ENCODE measurements at regions of chr16 and their contacts with region 1.

Region 1: GRCh38 chr16:29926005-29926710 is at the start of gene KCTD13:
- DNase-seq: peak; percentile 81 to 99 (median 92)
- ATAC-seq: peak; percentile 96
- H3K4me3 ChIP-seq: peak within 1 kb of the TSS; percentile 88
- H3K4me3 Mint-ChIP-seq: peak within 1 kb of the TSS; percentile 89 to 95 (median 93)
- H3K27ac ChIP-seq: peak within 1 kb of the TSS; percentile 94
- H3K27ac Mint-ChIP-seq: peak within 1 kb of the TSS; percentile 91 to 98 (median 97)
- H3K4me1 ChIP-seq: peaks cover 7 to 18% of the 10 kb centered on the region in 2 donors
- H3K4me1 Mint-ChIP-seq: peaks cover 30 to 50% (median 40%) of the 10 kb centered on the region in 7 donors
- H3K27me3 ChIP-seq: no peaks in the 10 kb centered on the region
- H3K27me3 Mint-ChIP-seq: peaks cover 0 to 2% (median 0%) of the 10 kb centered on the region in 5 donors
- total RNA-seq, gene KCTD13: 40.7 to 81.1 (median 45.9) TPM

Region 2: DNA sequence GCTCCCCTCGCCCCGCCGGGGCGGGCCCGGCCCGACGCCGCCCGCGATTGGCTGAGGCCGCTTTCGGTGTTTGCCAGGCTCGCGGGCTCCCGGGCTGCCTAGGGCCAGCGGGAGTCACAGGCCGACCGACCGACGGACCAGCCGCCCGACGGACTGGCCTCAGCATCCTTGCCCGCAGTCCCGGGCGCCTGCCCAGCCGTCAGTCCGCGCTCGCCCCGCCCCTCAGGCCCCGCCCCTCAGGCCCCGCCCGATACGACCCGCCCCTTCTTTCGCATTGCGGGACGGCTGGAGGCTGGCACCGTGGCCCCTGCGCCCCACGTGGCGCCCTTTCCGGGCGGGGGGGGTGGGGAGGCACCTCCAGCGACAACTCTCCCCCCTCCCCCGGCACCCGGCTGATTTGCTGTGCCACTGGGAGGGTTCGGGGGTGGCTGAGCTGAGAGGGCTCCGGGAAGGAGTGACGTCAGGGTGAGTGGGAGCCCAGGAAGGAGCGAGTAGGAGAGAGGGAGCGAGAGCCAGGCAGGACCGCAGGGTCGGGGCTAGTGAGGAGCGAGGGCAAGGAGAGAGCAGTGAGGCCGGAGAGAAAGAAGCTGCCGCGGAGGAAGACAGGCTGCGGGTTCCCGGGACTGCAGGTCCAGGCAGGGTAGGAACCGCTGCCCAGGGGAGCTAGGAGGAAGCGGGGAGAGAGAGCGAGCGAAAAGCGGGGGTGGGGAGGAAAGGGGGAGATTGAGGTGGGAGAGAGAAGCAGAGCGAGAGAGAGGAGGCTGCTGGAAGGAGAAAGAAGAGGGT is 25.9 kb before region 1 on chr16 and contains the start of gene ASPHD1:
- CTCF ChIA-PET with region 1: no interaction called
- POLR2A ChIA-PET with region 1: interaction called, 8 read pairs
- intact Hi-C with region 1: loop called in 1 of 2 experiments (anchors 1 kb)
- DNase-seq: peak; percentile 68 to 91 (median 79)
- ATAC-seq: peak; percentile 93
- H3K4me3 ChIP-seq: peak within 1 kb of the TSS; percentile 53
- H3K4me3 Mint-ChIP-seq: peak within 1 kb of the TSS; percentile 53 to 86 (median 72)
- H3K27ac ChIP-seq: no peak within 1 kb of the TSS
- H3K27ac Mint-ChIP-seq: no peak within 1 kb of the TSS
- H3K4me1 ChIP-seq: peaks cover 5% of the 10 kb centered on the region in 2 donors
- H3K4me1 Mint-ChIP-seq: peaks cover 4 to 19% (median 11%) of the 10 kb centered on the region in 7 donors
- H3K27me3 ChIP-seq: peaks cover 5 to 13% of the 10 kb centered on the region in 2 donors
- H3K27me3 Mint-ChIP-seq: peaks cover 16 to 35% (median 26%) of the 10 kb centered on the region in 5 donors
- total RNA-seq, gene ASPHD1: 0.27 TPM in 1 of 5 experiments, not detected in the others

Region 3: GRCh38 chr16:29961479-29962343 is 35.6 kb after region 1 on chr16 and contains the start of gene TMEM219:
- CTCF ChIA-PET with region 1: interaction called, 5 read pairs
- POLR2A ChIA-PET with region 1: interaction called, 28 read pairs
- intact Hi-C with region 1: loop called (anchors 1 kb)
- DNase-seq: peak; percentile 90 to 99 (median 96)
- ATAC-seq: peak; percentile 94
- H3K4me3 ChIP-seq: peak within 1 kb of the TSS; percentile 91
- H3K4me3 Mint-ChIP-seq: peak within 1 kb of the TSS; percentile 88 to 94 (median 92)
- H3K27ac ChIP-seq: peak within 1 kb of the TSS; percentile 85
- H3K27ac Mint-ChIP-seq: peak within 1 kb of the TSS; percentile 88 to 97 (median 95)
- H3K4me1 ChIP-seq: peaks cover 10 to 17% of the 10 kb centered on the region in 2 donors
- H3K4me1 Mint-ChIP-seq: peaks cover 8 to 31% (median 23%) of the 10 kb centered on the region in 7 donors
- H3K27me3 ChIP-seq: no peaks in the 10 kb centered on the region
- H3K27me3 Mint-ChIP-seq: no peaks in the 10 kb centered on the region
- total RNA-seq, gene TMEM219: 64.3 to 89.7 (median 74.0) TPM

Region 4: GRCh38 chr16:29995911-29996772 is 70.0 kb after region 1 on chr16 and contains the start of gene INO80E:
- CTCF ChIA-PET with region 1: no interaction called
- POLR2A ChIA-PET with region 1: interaction called, 20 read pairs
- intact Hi-C with region 1: loop called (anchors 1 kb)
- DNase-seq: peak; percentile 94 to 99 (median 98)
- ATAC-seq: peak; percentile 99
- H3K4me3 ChIP-seq: peak within 1 kb of the TSS; percentile 100
- H3K4me3 Mint-ChIP-seq: peak within 1 kb of the TSS; percentile 86 to 99 (median 98)
- H3K27ac ChIP-seq: peak within 1 kb of the TSS; percentile 99
- H3K27ac Mint-ChIP-seq: peak within 1 kb of the TSS; percentile 93 to 99 (median 97)
- H3K4me1 ChIP-seq: peaks cover 16 to 18% of the 10 kb centered on the region in 2 donors
- H3K4me1 Mint-ChIP-seq: peaks cover 24 to 53% (median 38%) of the 10 kb centered on the region in 7 donors
- H3K27me3 ChIP-seq: no peaks in the 10 kb centered on the region
- H3K27me3 Mint-ChIP-seq: no peaks in the 10 kb centered on the region
- total RNA-seq, gene INO80E: 71.7 to 141 (median 95.8) TPM

Region 5: GRCh38 chr16:30032083-30032819 is 106.1 kb after region 1 on chr16:
- CTCF ChIA-PET with region 1: interaction called, 3 read pairs
- POLR2A ChIA-PET with region 1: no interaction called
- intact Hi-C with region 1: loop called in 1 of 2 experiments (anchors 10 kb)
- DNase-seq: peak in 8 of 9 donors; percentile 47 to 66 (median 62)
- ATAC-seq: peak; percentile 81
- H3K4me3 ChIP-seq: no peak overlapping the region
- H3K4me3 Mint-ChIP-seq: peak overlapping the region in 8 of 10 donors; percentile 31 to 65 (median 48)
- H3K27ac ChIP-seq: no peak overlapping the region
- H3K27ac Mint-ChIP-seq: peak overlapping the region in 2 of 9 donors; percentile 38 to 46
- H3K4me1 ChIP-seq: no peaks in the 10 kb centered on the region
- H3K4me1 Mint-ChIP-seq: peaks cover 4 to 23% (median 9%) of the 10 kb centered on the region in 7 donors
- H3K27me3 ChIP-seq: peaks cover 11 to 13% of the 10 kb centered on the region in 2 donors
- H3K27me3 Mint-ChIP-seq: peaks cover 32 to 62% (median 36%) of the 10 kb centered on the region in 5 donors

Measured in naive thymus-derived CD4-positive, alpha-beta T cell (primary cell).